ENCODE measurements at regions of chr19 and their contacts with region 1.

Region 1: DNA sequence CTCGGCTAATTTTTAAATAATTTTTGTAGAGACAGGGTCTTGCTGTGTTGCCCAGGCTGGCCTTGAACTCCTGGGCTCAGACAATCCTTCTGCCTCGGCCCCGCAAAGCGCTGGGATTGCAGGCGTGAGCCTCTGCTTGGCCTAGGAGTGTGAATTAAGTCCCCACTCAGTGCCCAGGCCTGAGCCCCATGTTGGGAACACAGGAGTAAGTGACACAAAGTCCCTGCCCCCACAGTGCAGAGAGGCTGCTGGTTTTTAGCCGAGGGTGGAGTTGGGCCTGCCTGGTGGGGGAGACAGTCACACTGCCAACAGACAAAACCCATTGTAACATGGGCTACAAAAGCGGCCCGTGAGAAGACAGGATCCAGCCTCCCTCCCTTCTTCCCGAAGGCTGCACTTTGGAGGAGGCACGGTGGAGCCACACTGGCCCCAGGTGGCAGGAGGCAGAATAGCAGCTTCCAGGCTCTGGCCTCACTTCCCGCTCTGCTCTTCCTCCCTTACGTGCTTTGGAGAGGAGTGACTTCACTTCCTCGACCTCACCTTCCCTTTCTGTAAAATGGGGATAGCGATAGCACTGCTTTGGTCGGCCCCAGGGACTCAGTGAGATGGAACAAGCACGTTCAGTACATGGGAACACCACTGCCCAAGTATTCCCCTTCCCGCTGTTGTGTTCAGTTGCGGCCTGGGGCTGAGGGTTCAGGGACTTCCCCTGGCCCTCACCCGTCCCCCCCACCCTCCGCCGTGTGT is 15.2 kb upstream of the EHD2 start:
- DNase-seq: peak; percentile 90 to 94
- ATAC-seq: peak; percentile 80 to 88
- H3K4me3 ChIP-seq: no peak overlapping the region
- H3K27ac ChIP-seq: peak overlapping the region; percentile 59 to 77; a peak in 5 of 6 replicates
- H3K4me1 ChIP-seq: peaks cover 4% of the 10 kb centered on the region
- CTCF ChIP-seq: peak; percentile 97
- EP300 ChIP-seq: no peak
- POLR2A ChIP-seq: no peak
- RAD21 ChIP-seq: peak; percentile 98 to 100

Region 2: DNA sequence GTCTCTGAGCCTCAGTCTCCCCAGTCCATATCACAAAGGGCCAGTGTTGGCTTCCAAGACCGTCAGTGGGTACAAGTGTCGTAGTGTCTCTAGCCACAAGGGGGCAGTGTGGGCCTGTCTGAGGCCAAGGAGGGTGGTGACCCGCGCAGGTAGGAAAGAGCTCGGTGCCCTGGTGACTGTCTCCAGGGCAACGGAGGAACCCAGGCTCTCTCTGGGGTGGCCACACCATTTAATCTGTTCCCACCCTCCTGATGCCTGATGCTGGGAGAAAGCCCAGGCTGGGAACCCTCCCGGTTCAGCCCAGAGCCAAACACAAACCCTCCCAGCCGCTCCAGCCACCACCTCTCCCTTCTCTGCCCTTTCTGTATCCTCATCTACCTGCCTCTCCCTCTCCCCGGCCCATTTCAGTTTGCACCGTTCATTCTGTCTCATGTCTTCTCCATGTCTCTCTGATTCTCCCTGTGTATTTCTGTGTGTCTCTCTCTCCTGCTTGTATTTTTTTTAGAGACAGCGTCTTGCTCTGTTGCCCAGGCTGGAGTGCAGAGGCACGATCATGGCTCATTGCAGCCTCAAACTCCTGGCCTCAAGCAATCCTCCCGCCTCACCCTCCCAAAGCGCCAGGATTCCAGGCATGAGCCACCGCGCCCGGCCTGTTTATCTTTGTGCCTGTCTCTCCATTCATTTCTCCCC is 261.2 kb before region 1 on chr19:
- CTCF ChIA-PET with region 1: interaction called, 901 read pairs
- POLR2A ChIA-PET with region 1: no interaction called
- DNase-seq: peak; percentile 82 to 86
- ATAC-seq: peak; percentile 84 to 95
- H3K4me3 ChIP-seq: no peak overlapping the region
- H3K27ac ChIP-seq: no peak overlapping the region
- H3K4me1 ChIP-seq: no peaks in the 10 kb centered on the region
- CTCF ChIP-seq: peak; percentile 92
- EP300 ChIP-seq: no peak
- POLR2A ChIP-seq: no peak
- RAD21 ChIP-seq: peak; percentile 96 to 99

Region 3: DNA sequence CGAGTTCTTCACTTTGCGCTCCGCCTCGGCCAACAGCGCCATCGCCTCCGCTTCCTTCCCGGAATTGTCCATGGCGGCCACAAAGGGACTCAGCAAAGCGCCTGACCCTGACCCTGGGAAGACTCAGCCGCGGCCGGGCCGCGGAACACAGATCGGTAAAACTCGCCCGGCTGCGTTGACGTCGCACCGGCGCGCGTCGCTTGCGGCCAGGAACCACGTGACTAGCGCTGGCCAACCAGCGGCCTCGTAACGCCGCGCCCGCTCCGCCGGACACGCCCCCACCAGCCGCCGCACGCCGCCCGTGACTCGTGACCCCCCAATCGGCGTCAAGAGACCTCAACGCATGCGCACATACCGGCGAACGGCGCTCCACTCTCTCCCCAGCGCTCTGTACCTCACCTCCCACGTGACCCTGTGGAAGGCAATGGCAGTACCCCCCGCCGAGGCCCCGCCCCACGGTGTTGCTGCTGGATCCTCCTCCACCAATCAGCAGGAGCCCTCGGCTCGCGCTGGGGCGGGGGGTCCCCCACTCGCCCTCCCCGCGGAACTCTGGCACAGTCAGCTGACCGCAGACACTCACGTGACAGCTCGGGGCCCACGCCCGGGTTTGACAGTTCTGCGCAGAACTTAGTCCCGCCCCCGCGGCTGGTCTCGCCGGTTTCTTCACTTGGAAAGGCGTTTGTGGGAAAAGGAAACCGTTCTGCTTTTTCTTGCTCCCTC is 183.0 kb before region 1 on chr19 and contains the start of gene NAPA:
- CTCF ChIA-PET with region 1: interaction called, 57 read pairs
- POLR2A ChIA-PET with region 1: no interaction called
- DNase-seq: peak; percentile 100
- ATAC-seq: peak; percentile 87 to 96
- H3K4me3 ChIP-seq: peak within 1 kb of the TSS; percentile 89
- H3K27ac ChIP-seq: peak within 1 kb of the TSS; percentile 90 to 92
- H3K4me1 ChIP-seq: peaks cover 28% of the 10 kb centered on the region
- CTCF ChIP-seq: no peak
- EP300 ChIP-seq: no peak
- POLR2A ChIP-seq: peak; percentile 67
- RAD21 ChIP-seq: peak; percentile 64 to 79; a peak in 4 of 5 replicates
- polyA plus RNA-seq, gene NAPA: 69.6 and 74.3 TPM in 2 replicates

Region 4: DNA sequence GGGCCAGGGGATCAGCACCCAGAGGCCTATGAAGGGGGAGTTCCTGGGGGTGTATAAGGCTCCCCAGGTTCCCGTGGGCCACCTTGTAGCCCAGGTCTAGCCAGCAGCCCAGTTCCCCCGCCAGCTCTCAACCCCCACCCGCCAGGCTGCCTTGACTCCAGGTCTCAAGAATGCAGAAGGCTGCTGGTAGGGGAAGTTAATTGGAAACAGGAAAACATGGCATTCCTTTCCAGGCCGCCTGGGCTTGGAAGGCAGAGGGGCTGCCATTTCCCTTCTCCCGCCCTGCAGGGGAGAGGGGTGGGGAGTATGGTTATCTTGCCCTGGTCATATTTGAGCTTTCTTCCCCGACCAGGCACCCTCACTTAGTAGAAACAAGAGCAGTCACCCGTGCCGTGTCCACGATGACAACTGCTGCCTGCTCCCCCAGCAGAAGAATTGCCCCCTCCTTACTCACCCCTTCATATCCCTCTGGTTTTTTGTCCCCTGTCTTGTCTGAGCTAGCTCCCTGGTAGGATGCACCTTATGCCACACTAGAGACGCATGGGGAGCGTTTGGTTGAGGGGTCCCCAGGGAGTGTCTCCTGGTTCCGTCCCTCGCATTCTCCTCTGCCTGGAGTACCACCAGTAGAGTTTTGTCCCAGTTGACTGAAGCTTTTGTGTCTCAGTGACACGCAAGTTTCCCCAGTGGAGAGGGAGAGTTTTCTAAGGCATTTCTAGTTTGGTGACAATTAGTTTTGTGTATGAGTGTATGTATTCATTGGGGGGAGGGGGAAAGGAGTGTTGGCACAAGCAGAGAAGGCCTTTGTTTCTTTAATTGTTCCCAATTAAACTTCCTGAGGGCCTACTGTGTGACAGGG is 84.6 kb before region 1 on chr19:
- CTCF ChIA-PET with region 1: interaction called, 12 read pairs
- POLR2A ChIA-PET with region 1: no interaction called
- DNase-seq: no peak
- ATAC-seq: no peak
- H3K4me3 ChIP-seq: no peak overlapping the region
- H3K27ac ChIP-seq: peak overlapping the region in 1 of 2 experiments; percentile 27; a peak in 2 of 6 replicates
- H3K4me1 ChIP-seq: peaks cover 20% of the 10 kb centered on the region
- CTCF ChIP-seq: no peak
- EP300 ChIP-seq: no peak
- POLR2A ChIP-seq: no peak
- RAD21 ChIP-seq: no peak

Region 5: DNA sequence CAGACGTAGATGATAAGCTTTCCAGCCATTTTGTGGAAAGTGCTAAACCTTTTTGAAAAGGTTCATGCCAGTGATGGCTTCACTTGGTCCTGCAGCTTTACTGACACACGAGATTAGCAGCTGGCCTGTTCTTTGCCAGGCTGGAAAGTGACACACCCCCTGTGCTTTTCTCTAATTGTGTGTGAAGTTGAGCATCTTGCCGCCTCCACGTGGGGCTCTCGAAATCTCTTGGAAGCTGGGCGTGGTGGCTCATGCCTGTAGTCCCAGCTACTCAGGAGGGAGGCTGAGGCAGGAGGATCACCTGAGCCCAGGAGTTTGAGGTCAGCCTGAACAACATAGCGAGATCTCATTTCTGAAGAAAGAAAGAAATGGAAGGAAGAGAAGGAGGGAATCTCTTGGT is 10.1 kb before region 1 on chr19:
- CTCF ChIA-PET with region 1: interaction called, 68 read pairs
- POLR2A ChIA-PET with region 1: no interaction called
- DNase-seq: no peak
- ATAC-seq: no peak
- H3K4me3 ChIP-seq: no peak overlapping the region
- H3K27ac ChIP-seq: no peak overlapping the region
- H3K4me1 ChIP-seq: no peaks in the 10 kb centered on the region
- CTCF ChIP-seq: no peak
- EP300 ChIP-seq: no peak
- POLR2A ChIP-seq: no peak
- RAD21 ChIP-seq: no peak

Region 6: DNA sequence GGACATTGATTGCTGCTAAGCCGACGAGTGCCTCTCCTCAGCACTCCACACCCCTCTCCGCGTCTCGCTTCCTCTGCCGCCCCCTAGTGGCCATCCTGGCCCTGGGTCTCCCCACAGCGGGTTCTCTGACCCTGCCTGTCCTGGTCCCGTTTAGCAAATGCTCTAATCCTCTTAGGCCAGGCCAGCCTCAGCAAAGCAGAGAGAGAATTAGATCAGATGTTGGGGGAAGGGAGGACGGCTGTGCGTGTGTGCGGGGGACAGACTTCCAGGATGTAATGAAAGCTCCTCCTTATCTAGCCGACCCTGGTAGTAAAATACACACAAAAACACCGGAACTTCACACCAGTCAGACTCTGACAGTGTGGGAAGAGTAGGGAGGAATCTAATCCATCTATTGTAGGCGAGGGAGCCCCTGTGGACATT is 165.5 kb after region 1 on chr19:
- CTCF ChIA-PET with region 1: interaction called, 12 read pairs
- POLR2A ChIA-PET with region 1: no interaction called
- DNase-seq: peak; percentile 82 to 97
- ATAC-seq: peak; percentile 91 to 98
- H3K4me3 ChIP-seq: no peak overlapping the region
- H3K27ac ChIP-seq: no peak overlapping the region
- H3K4me1 ChIP-seq: peaks cover 1% of the 10 kb centered on the region
- CTCF ChIP-seq: peak; percentile 98
- EP300 ChIP-seq: no peak
- POLR2A ChIP-seq: no peak
- RAD21 ChIP-seq: peak; percentile 81 to 89